ENCODE measurements at regions of chr9 and their contacts with region 1.

Region 1: DNA sequence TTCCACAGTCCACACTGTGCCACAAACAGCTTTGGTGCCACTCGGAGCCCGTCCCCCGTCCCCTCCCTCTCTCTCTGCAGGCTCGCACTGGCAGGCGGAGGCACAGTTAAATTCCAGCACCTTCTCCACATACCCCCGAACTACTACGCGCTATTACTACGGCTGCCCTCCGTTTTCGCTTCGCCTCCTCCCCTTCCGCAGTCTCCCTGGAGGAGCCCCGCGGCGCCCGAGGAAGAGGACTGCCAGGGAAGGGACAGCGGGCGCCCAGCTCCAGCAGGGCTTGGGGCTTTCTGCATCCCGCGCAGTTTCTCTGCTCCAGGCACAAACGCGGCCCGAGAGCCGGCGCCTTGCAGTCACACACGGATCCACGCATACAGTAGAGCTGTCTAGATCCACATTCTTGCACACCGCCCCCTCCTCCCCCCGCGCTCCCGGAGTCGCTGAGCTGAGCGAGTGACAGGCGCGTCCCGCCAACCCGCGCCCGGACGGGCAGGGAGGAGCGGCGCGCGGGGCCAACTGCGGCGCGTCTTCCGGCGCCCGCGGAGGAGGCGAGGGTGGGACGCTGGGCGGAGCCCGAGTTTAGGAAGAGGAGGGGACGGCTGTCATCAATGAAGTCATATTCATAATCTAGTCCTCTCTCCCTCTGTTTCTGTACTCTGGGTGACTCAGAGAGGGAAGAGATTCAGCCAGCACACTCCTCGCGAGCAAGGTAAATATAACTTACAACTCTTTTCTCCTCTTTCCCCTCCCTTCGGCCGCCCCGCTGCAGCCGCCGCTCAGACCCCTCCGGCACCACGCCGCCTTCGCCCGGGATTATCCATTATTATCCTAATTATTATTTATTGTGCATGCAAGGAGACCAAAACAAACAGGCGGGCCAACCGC is at the start of gene SMARCA2:
- DNase-seq: peak; percentile 98
- H3K4me3 ChIP-seq: peak within 1 kb of the TSS; percentile 83 to 87
- H3K27ac ChIP-seq: peak within 1 kb of the TSS; percentile 95 to 98
- H3K4me1 ChIP-seq: peaks cover 8% of the 10 kb centered on the region
- H3K27me3 ChIP-seq: no peaks in the 10 kb centered on the region
- CTCF ChIP-seq: no peak
- POLR2A ChIP-seq: peak; percentile 84
- total RNA-seq, gene SMARCA2: 125 to 175 TPM

Region 2: GRCh38 chr9:2125906-2126305 is 111.0 kb after region 1 on chr9:
- intact Hi-C with region 1: loop called (anchors 2 kb)
- DNase-seq: no peak
- H3K4me3 ChIP-seq: no peak overlapping the region
- H3K27ac ChIP-seq: peak overlapping the region; percentile 54 to 70
- H3K4me1 ChIP-seq: no peaks in the 10 kb centered on the region
- H3K27me3 ChIP-seq: no peaks in the 10 kb centered on the region
- CTCF ChIP-seq: no peak
- POLR2A ChIP-seq: no peak

Region 3: GRCh38 chr9:2849941-2850340 is 835.0 kb after region 1 on chr9:
- intact Hi-C with region 1: loop called (anchors 10 kb)
- DNase-seq: no peak
- H3K4me3 ChIP-seq: no peak overlapping the region
- H3K27ac ChIP-seq: no peak overlapping the region
- H3K4me1 ChIP-seq: no peaks in the 10 kb centered on the region
- H3K27me3 ChIP-seq: no peaks in the 10 kb centered on the region
- CTCF ChIP-seq: no peak
- POLR2A ChIP-seq: no peak